ENCODE measurements at regions of chr16 and their contacts with region 1.

Region 1: DNA sequence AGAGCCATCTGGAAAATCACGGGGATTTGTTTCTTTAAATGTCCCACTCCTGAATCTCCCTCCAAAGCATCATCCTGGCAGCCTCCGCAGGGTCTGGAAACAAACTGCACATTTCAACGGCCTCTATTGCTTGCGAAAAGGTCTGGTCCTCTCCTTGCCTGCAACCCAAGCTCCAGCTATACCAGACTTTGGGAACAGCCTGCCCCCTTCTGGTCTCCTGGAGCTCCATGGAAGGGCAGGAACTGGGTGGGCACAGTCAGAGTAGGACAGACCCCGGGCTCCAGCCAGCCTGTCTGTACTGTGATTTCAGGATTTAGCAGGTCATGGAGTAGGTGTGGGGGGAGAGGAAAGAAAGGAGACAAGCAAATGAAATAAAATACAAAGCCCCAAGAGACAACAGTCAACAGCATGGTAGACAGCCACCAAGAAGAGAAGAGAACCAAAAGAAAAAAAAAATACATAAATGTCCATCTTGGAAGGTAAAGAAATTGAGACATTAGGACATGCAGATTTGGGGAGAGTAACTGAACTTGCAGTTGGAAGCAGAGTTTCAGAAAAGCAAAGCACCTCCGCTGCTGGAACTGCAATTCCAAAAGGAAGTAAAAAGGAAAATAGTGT is 2.7 kb downstream of the XYLT1 start:
- DNase-seq: peak; percentile 85
- H3K4me3 ChIP-seq: no peak overlapping the region
- H3K27ac ChIP-seq: no peak overlapping the region
- H3K4me1 ChIP-seq: peaks cover 14% of the 10 kb centered on the region
- H3K27me3 ChIP-seq: no peaks in the 10 kb centered on the region
- CTCF ChIP-seq: peak; percentile 54

Region 2: GRCh38 chr16:16861546-16861945 is 606.5 kb before region 1 on chr16:
- intact Hi-C with region 1: loop called (anchors 5 kb)
- DNase-seq: peak; percentile 52
- H3K4me3 ChIP-seq: no peak overlapping the region
- H3K27ac ChIP-seq: no peak overlapping the region
- H3K4me1 ChIP-seq: no peaks in the 10 kb centered on the region
- H3K27me3 ChIP-seq: no peaks in the 10 kb centered on the region
- CTCF ChIP-seq: peak; percentile 81

Region 3: DNA sequence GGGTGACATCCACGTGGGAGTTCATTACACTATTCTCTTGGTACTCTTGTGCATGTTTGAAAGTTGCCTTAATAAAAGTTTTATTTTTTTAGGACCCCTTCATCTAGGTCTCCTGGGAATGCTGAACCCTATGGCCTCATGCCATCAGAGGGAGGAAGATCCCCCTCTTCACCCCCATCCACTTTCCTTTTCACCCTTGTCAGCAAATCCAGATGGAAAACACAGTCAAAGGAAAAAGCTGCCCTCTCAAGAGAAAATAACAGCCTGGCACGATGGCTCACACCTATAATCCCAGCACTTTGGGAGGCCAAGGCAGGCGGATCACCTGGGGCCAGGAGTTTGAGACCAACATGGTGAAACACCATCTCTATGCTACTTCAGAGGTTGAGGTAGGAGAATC is 271.5 kb before region 1 on chr16:
- intact Hi-C with region 1: loop called (anchors 5 kb)
- DNase-seq: no peak
- H3K4me3 ChIP-seq: no peak overlapping the region
- H3K27ac ChIP-seq: no peak overlapping the region
- H3K4me1 ChIP-seq: no peaks in the 10 kb centered on the region
- H3K27me3 ChIP-seq: no peaks in the 10 kb centered on the region
- CTCF ChIP-seq: no peak

Region 4: DNA sequence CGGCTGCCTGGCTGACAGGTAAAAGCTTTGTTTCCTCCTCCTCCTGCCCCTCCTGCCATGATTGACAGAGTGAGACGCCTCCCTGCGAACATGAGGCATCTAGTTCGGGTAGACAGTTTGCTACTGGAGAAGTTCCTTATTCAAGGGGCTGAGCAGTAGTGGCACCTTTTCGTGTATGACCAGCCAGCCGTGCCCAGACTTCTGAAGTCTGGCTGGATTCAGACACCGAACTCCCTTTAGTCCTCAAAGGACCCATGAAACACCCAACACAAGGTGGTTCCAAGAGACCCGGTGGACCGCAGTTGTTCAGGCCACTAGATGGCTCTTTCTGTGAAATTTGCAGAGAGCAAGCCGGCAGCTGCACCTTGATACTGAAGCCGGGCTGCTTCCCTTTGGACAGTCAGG is 190.1 kb before region 1 on chr16:
- intact Hi-C with region 1: loop called (anchors 5 kb)
- DNase-seq: peak; percentile 76
- H3K4me3 ChIP-seq: no peak overlapping the region
- H3K27ac ChIP-seq: peak overlapping the region; percentile 68
- H3K4me1 ChIP-seq: peaks cover 3% of the 10 kb centered on the region
- H3K27me3 ChIP-seq: no peaks in the 10 kb centered on the region
- CTCF ChIP-seq: peak; percentile 29

Region 5: GRCh38 chr16:17345043-17345442 is 123.0 kb before region 1 on chr16:
- intact Hi-C with region 1: loop called (anchors 5 kb)
- DNase-seq: no peak
- H3K4me3 ChIP-seq: no peak overlapping the region
- H3K27ac ChIP-seq: no peak overlapping the region
- H3K4me1 ChIP-seq: peaks cover 10% of the 10 kb centered on the region
- H3K27me3 ChIP-seq: no peaks in the 10 kb centered on the region
- CTCF ChIP-seq: no peak

Region 6: GRCh38 chr16:17602678-17603077 is 134.6 kb after region 1 on chr16:
- intact Hi-C with region 1: no loop called
- DNase-seq: no peak
- H3K4me3 ChIP-seq: no peak overlapping the region
- H3K27ac ChIP-seq: no peak overlapping the region
- H3K4me1 ChIP-seq: no peaks in the 10 kb centered on the region
- H3K27me3 ChIP-seq: no peaks in the 10 kb centered on the region
- CTCF ChIP-seq: no peak